GM10248 (cell line): ENCODE measurements at regions of chr1 and their contacts with region 1.

Region 1: GRCh38 chr1:95084317-95085176 is 11.8 kb upstream of the ALG14 start:
- DNase-seq: peak; percentile 59
- CTCF ChIP-seq: peak; percentile 76

Region 2: GRCh38 chr1:95072532-95073419 is 11.8 kb before region 1 on chr1 and contains the start of gene ALG14:
- CTCF ChIA-PET with region 1: interaction called, 54 read pairs
- POLR2A ChIA-PET with region 1: no interaction called
- DNase-seq: peak; percentile 89
- CTCF ChIP-seq: no peak

Region 3: DNA sequence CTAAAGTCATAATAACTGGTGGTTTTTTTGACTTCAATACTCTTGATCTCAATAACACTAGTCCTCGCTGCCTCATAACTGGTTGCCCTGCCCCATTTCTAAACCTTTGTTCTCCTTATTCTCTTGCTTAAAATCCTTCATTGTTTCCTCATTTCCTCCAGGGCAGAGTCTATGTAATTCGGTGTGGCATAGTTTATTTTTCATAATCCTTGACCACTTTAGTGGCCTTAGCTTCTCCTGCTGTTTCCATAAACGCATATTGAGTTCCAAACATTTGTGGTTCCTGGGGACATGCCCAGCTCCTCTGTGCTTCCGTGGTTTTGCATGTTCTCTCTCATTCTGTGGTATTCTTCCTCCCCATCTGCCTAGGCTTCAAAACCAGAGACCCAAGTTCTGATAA is 13.6 kb after region 1 on chr1:
- CTCF ChIA-PET with region 1: interaction called, 15 read pairs
- POLR2A ChIA-PET with region 1: no interaction called
- DNase-seq: no peak
- CTCF ChIP-seq: no peak